CD4-positive, alpha-beta memory T cell (primary cell): ENCODE measurements at regions of chr15 and their contacts with region 1.

Region 1: GRCh38 chr15:89416141-89416853 is 80.1 kb downstream of the RHCG start:
- DNase-seq: peak; percentile 48 to 71 (median 53)
- H3K4me3 ChIP-seq: no peak overlapping the region
- H3K4me3 Mint-ChIP-seq: peak overlapping the region in 6 of 8 donors; percentile 11 to 52 (median 30)
- H3K27ac ChIP-seq: no peak overlapping the region
- H3K27ac Mint-ChIP-seq: peak overlapping the region in 1 of 7 donors; percentile 78
- H3K4me1 ChIP-seq: peaks cover 7% of the 10 kb centered on the region
- H3K4me1 Mint-ChIP-seq: peaks cover 8 to 16% (median 11%) of the 10 kb centered on the region in 4 donors
- H3K27me3 ChIP-seq: peaks cover 52% of the 10 kb centered on the region
- H3K27me3 Mint-ChIP-seq: peaks cover 64 to 70% of the 10 kb centered on the region in 2 donors

Region 2: DNA sequence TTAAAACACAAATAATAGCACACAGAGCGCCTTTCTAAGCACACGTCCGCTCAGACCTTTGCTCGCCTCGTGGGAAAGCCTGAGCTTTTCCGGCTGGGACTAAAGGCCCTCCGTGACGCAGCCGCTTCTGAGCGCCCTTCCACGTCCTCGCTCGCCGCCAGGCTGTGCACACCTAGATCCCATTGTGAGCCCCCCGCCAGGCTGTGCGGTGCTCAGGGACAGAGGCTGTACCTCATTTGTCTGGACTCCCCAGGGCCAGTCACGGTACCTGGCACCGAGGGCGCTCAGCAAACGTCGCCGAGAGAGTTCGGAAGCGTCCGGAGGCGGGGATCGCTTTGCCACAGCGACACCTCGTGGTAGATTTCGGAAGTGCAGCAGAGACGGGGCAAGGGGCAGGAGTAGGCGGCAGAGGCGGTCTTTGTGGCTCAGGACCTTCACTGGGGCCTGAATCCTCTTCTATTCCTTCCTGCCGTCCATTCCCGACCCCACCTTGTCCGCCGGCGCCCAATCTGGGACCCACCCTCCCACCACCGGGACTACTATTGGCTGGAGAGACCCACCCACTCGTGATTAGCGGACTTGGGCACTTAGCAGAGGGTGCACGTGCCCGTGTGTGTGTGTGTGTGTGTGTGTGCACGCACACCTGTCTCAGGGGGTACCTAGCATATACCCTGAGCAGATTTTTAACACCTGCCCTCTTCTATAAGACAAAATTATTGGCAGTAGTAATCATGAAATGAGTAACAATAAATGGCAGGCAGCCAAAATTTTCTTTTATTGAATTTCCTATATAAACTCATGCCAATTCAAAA is 14.4 kb after region 1 on chr15:
- CTCF ChIA-PET with region 1: interaction called, 5 read pairs
- POLR2A ChIA-PET with region 1: no interaction called
- intact Hi-C with region 1: loop called (anchors 1 kb)
- DNase-seq: peak; percentile 73 to 84 (median 77)
- H3K4me3 ChIP-seq: peak overlapping the region; percentile 31 to 51
- H3K4me3 Mint-ChIP-seq: peak overlapping the region; percentile 74 to 89 (median 82)
- H3K27ac ChIP-seq: no peak overlapping the region
- H3K27ac Mint-ChIP-seq: peak overlapping the region in 1 of 7 donors; percentile 53
- H3K4me1 ChIP-seq: peaks cover 5% of the 10 kb centered on the region
- H3K4me1 Mint-ChIP-seq: peaks cover 4 to 7% (median 6%) of the 10 kb centered on the region in 4 donors
- H3K27me3 ChIP-seq: no peaks in the 10 kb centered on the region
- H3K27me3 Mint-ChIP-seq: peaks cover 6 to 23% of the 10 kb centered on the region in 2 donors